Caco-2 (cell line): ENCODE measurements at regions of chrX and their contacts with region 1.

Region 1: DNA sequence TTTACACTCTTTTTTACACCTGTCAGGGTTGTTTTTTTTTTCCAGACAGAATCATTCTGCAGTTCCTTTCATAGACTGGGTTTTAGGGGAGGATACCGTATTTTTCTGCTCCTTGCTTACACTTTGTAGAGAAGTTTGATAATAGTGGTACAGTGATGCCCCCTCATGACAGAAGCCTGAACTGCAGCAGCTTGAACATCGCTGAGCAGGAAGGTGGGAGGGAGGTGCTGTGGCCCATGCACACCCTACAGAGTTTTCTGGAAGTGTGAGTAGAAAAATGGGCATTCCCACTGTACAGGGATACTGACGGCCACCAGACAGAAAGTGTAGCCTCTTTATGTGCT is 54.5 kb downstream of the RAB40A start:
- DNase-seq: peak; percentile 61 to 78
- H3K4me3 ChIP-seq: no peak overlapping the region
- H3K4me3 Mint-ChIP-seq: no peak overlapping the region
- H3K27ac Mint-ChIP-seq: no peak overlapping the region
- H3K4me1 ChIP-seq: peaks cover 11% of the 10 kb centered on the region; the same call in 1 of the 2 replicates
- H3K4me1 Mint-ChIP-seq: peaks cover 35% of the 10 kb centered on the region
- H3K27me3 ChIP-seq: no peaks in the 10 kb centered on the region
- H3K27me3 Mint-ChIP-seq: no peaks in the 10 kb centered on the region
- CTCF ChIP-seq: peak; percentile 59 to 76

Region 2: GRCh38 chrX:103211012-103211715 is 253.6 kb before region 1 on chrX:
- CTCF ChIA-PET with region 1: interaction called, 5 read pairs
- POLR2A ChIA-PET with region 1: no interaction called
- intact Hi-C with region 1: loop called (anchors 1 kb)
- DNase-seq: peak; percentile 23 to 35
- H3K4me3 ChIP-seq: no peak overlapping the region
- H3K4me3 Mint-ChIP-seq: no peak overlapping the region
- H3K27ac Mint-ChIP-seq: no peak overlapping the region
- H3K4me1 ChIP-seq: no peaks in the 10 kb centered on the region
- H3K4me1 Mint-ChIP-seq: no peaks in the 10 kb centered on the region
- H3K27me3 ChIP-seq: no peaks in the 10 kb centered on the region
- H3K27me3 Mint-ChIP-seq: no peaks in the 10 kb centered on the region
- CTCF ChIP-seq: peak; percentile 40 to 45

Region 3: GRCh38 chrX:103254921-103255493 is 209.7 kb before region 1 on chrX and contains the start of gene TCEAL8:
- CTCF ChIA-PET with region 1: interaction called, 4 read pairs
- POLR2A ChIA-PET with region 1: no interaction called
- intact Hi-C with region 1: loop called (anchors 5 kb)
- DNase-seq: peak; percentile 54 to 71
- H3K4me3 ChIP-seq: peak within 1 kb of the TSS; percentile 63
- H3K4me3 Mint-ChIP-seq: peak within 1 kb of the TSS; percentile 94
- H3K27ac Mint-ChIP-seq: peak within 1 kb of the TSS; percentile 91
- H3K4me1 ChIP-seq: peaks cover 3% of the 10 kb centered on the region; the same call in 1 of the 2 replicates
- H3K4me1 Mint-ChIP-seq: peaks cover 12% of the 10 kb centered on the region
- H3K27me3 ChIP-seq: no peaks in the 10 kb centered on the region
- H3K27me3 Mint-ChIP-seq: no peaks in the 10 kb centered on the region
- CTCF ChIP-seq: no peak
- total RNA-seq, gene TCEAL8: 21.5 and 22.0 TPM in 2 replicates

Region 4: DNA sequence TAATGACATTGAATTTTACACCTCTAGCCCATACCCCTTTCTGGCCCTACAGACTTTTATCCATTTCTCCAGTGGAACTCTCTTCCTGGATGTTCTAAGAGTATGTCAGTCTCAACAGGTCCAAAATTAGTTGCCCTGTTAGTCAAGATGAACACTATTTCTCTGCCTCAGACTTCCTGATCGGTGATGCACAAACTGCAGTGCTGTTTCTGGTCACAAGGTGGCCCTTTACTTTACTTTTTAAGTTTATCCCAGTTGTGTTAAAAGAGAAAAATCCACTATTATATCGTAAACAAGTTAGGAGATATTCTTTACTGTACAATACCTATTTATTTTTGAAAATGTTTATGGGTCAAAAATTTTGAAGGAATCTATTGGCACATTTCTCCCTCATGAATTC is 121.6 kb before region 1 on chrX:
- CTCF ChIA-PET with region 1: interaction called, 6 read pairs
- POLR2A ChIA-PET with region 1: no interaction called
- intact Hi-C with region 1: loop called (anchors 1 kb)
- DNase-seq: peak; percentile 37
- H3K4me3 ChIP-seq: no peak overlapping the region
- H3K4me3 Mint-ChIP-seq: no peak overlapping the region
- H3K27ac Mint-ChIP-seq: no peak overlapping the region
- H3K4me1 ChIP-seq: no peaks in the 10 kb centered on the region
- H3K4me1 Mint-ChIP-seq: peaks cover 6% of the 10 kb centered on the region
- H3K27me3 ChIP-seq: no peaks in the 10 kb centered on the region
- H3K27me3 Mint-ChIP-seq: no peaks in the 10 kb centered on the region
- CTCF ChIP-seq: peak; percentile 37 to 67

Region 5: DNA sequence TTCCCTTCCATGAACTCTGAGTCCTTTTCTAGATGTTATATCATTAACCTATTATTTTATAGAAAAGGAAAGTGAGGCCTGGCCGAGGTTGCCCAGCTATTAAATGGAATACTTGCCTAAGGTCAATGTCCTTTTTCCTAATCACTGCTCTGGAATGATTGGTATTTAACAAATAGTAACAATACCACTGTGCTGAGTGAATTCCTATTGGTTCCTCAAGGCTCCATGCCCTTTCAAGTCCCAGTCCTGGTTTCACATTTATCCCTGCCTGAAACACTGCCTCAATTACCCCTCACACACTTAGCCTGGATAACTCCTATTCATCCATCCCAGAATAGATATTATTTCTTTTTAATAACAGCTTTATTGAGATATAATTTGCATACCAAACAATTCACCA is 102.2 kb before region 1 on chrX:
- CTCF ChIA-PET with region 1: no interaction called
- POLR2A ChIA-PET with region 1: no interaction called
- intact Hi-C with region 1: loop called (anchors 5 kb)
- DNase-seq: peak; percentile 37 to 40
- H3K4me3 ChIP-seq: no peak overlapping the region
- H3K4me3 Mint-ChIP-seq: peak overlapping the region; percentile 42
- H3K27ac Mint-ChIP-seq: peak overlapping the region; percentile 78
- H3K4me1 ChIP-seq: peaks cover 39% of the 10 kb centered on the region
- H3K4me1 Mint-ChIP-seq: peaks cover 34% of the 10 kb centered on the region
- H3K27me3 ChIP-seq: no peaks in the 10 kb centered on the region
- H3K27me3 Mint-ChIP-seq: no peaks in the 10 kb centered on the region
- CTCF ChIP-seq: no peak

Region 6: DNA sequence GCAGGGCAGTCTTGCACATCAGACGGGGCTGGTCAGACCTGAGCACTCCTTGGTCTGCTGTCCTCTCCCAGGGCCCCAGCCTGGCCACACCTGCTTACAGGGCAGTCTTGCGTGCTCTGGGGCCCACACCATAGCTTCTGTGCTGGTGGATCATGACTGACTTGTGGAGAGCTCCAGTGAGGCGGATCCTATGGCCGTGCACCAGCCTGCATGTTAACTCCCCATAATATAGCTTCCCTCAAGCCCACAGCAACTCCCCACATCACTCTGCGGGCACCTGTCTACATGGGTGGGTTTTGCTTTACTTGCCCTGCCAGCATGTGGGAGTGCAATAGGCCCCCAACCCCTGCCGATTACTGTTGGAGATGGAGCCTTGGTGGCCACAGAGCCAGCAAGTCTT is 489.5 kb after region 1 on chrX:
- CTCF ChIA-PET with region 1: no interaction called
- POLR2A ChIA-PET with region 1: no interaction called
- intact Hi-C with region 1: no loop called
- DNase-seq: no peak
- H3K4me3 ChIP-seq: no peak overlapping the region
- H3K4me3 Mint-ChIP-seq: no peak overlapping the region
- H3K27ac Mint-ChIP-seq: no peak overlapping the region
- H3K4me1 ChIP-seq: no peaks in the 10 kb centered on the region
- H3K4me1 Mint-ChIP-seq: no peaks in the 10 kb centered on the region
- H3K27me3 ChIP-seq: no peaks in the 10 kb centered on the region
- H3K27me3 Mint-ChIP-seq: peaks cover 5% of the 10 kb centered on the region
- CTCF ChIP-seq: no peak